Ovary (tissue), 10 donors: ENCODE measurements at regions of chr17 and their contacts with region 1.

Region 1: GRCh38 chr17:79915850-79916430 is 76.7 kb upstream of the CBX4 start:
- DNase-seq: peak in 1 of 5 donors; percentile 51
- H3K4me3 ChIP-seq: no peak overlapping the region
- H3K27ac ChIP-seq: no peak overlapping the region
- H3K4me1 ChIP-seq: peaks cover 2% of the 10 kb centered on the region
- H3K27me3 ChIP-seq: no peaks in the 10 kb centered on the region
- CTCF ChIP-seq: peak in 1 of 3 donors; percentile 24
- EP300 ChIP-seq: no peak
- POLR2A ChIP-seq: no peak

Region 2: GRCh38 chr17:79741751-79742588 is 174.0 kb before region 1 on chr17:
- intact Hi-C with region 1: loop called in 1 of 4 experiments (anchors 10 kb)
- DNase-seq: peak; percentile 56 to 82 (median 69)
- H3K4me3 ChIP-seq: no peak overlapping the region
- H3K27ac ChIP-seq: no peak overlapping the region
- H3K4me1 ChIP-seq: peaks cover 3% of the 10 kb centered on the region
- H3K27me3 ChIP-seq: no peaks in the 10 kb centered on the region
- CTCF ChIP-seq: peak; percentile 72 to 85 (median 79)
- EP300 ChIP-seq: no peak
- POLR2A ChIP-seq: no peak

Region 3: DNA sequence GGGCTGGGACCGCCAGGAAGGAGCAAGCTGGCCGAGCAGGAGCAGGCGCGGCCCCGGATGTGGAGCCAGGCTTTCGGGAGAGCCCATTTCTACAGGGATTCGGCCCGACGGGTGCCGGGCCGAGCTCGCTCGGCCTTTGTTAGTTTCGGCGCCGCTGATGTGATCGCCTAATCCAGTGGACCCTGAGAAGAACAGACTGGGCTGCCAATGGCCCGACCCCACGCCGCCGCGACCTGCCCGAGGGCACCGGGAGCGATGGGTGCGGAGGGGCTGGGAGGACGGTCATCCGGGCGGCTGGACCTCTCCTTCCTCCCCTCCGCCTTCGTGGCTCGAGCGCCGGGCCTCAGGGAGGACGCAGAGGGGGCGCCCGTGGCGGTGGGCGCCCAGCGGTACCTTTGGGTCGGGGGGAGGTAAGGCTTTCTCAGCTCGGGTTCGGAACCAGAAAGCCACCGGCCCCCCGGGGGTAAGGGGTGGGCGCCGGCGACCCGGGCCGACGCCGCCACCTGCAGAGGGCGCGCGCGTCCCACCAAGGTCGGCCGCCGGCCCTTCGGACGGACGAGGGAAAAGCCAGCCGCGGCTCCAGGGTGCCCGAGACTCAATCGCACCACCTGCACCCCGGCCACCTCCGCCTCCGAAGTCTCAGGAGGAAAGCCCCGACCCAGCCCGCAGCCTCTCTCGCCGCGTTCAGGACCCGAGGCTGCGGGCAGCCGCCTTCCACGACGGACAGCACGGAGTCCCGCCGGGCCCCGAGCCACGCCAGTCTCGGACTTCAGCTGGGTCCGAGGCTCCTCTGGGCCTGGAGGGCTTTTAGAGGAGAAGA is 126.2 kb before region 1 on chr17:
- intact Hi-C with region 1: loop called in 1 of 4 experiments (anchors 10 kb)
- DNase-seq: peak in 4 of 5 donors; percentile 59 to 75 (median 66)
- H3K4me3 ChIP-seq: no peak overlapping the region
- H3K27ac ChIP-seq: no peak overlapping the region
- H3K4me1 ChIP-seq: peaks cover 6% of the 10 kb centered on the region
- H3K27me3 ChIP-seq: peaks cover 15% of the 10 kb centered on the region
- CTCF ChIP-seq: peak; percentile 45 to 75 (median 65)
- EP300 ChIP-seq: no peak
- POLR2A ChIP-seq: no peak

Region 4: GRCh38 chr17:79866791-79867518 is 49.0 kb before region 1 on chr17:
- intact Hi-C with region 1: loop called in 1 of 4 experiments (anchors 10 kb)
- DNase-seq: no peak
- H3K4me3 ChIP-seq: no peak overlapping the region
- H3K27ac ChIP-seq: no peak overlapping the region
- H3K4me1 ChIP-seq: no peaks in the 10 kb centered on the region
- H3K27me3 ChIP-seq: no peaks in the 10 kb centered on the region
- CTCF ChIP-seq: no peak
- EP300 ChIP-seq: no peak
- POLR2A ChIP-seq: no peak

Region 5: DNA sequence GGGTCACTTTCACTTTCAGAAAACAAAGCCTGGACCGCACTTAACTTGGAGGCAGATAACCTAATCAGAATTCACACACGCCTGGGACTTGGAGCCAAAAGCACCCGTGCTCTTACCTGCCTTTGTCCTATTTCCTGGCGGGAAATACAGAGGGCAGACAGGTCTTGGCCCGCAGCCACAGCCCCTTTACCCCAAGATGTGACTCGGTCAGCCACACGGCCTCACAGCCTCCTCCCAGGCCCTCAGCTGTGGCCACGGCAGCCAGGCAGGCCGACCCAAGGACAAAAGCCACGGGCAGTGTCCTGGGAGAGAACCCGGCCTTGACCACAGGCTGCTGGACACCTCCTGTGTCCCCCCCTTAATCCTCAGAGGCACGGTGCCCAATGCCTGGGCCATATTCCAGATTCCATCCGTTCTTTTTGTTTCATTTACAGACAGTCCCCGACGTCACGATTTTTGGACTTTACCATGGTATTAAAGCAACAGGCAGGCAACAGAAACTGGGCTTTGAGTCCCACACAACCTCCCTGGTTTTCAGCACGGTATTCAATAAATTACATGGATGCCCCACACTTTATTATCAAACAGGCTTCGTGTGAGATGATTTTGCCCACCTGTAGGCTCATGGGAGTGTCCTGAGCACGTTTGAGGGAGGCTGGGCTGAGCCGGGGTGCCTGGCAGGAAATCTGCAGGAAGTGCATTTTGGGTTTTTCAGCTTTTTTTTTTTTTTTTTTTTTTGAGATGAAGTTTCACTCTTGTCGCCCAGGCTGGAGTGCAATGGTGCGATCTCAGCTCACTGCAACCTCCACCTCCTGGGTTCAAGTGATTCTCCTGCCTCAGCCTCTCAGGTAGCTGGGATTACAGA is 155.4 kb after region 1 on chr17:
- intact Hi-C with region 1: no loop called
- DNase-seq: peak; percentile 75 to 91 (median 85)
- H3K4me3 ChIP-seq: peak overlapping the region; percentile 38
- H3K27ac ChIP-seq: peak overlapping the region; percentile 79 to 85
- H3K4me1 ChIP-seq: peaks cover 17% of the 10 kb centered on the region
- H3K27me3 ChIP-seq: no peaks in the 10 kb centered on the region
- CTCF ChIP-seq: no peak
- EP300 ChIP-seq: no peak
- POLR2A ChIP-seq: no peak